Activated CD4-positive, alpha-beta T cell treated with anti-CD3 and anti-CD28 coated beads, Interleukin-2, amount 10 ng/mL, durations not matched to agents 24 days and 14 days (primary cell): ENCODE measurements at regions of chr2 and their contacts with region 1.

Region 1: GRCh38 chr2:38535744-38536506 is 66.8 kb downstream of the HNRNPLL start:
- DNase-seq: peak; percentile 95
- H3K4me3 Mint-ChIP-seq: peak overlapping the region; percentile 71
- H3K27ac Mint-ChIP-seq: no peak overlapping the region
- H3K4me1 Mint-ChIP-seq: peaks cover 2% of the 10 kb centered on the region
- H3K27me3 Mint-ChIP-seq: peaks cover 38% of the 10 kb centered on the region

Region 2: DNA sequence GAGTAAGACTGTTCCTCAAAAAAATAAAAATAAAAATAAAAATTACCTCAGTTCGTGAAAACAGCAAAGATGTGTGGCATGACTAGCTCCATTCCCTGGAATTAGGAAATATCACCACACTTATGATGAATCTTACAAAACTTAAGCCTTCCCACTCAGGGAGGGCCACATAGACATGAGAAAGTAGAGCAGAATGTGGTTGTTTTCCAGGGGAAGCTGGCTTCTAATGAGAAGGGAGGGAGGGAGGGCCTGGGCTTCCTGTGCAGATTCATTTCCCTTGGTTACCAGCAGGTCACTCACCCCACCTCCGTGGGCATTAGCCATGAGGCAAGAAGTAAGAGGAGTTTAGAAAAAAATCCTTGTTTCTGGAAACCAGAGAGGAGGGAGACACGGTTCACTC is 706.7 kb before region 1 on chr2:
- intact Hi-C with region 1: no loop called
- DNase-seq: no peak
- H3K4me3 Mint-ChIP-seq: no peak overlapping the region
- H3K27ac Mint-ChIP-seq: no peak overlapping the region
- H3K4me1 Mint-ChIP-seq: peaks cover 11% of the 10 kb centered on the region
- H3K27me3 Mint-ChIP-seq: no peaks in the 10 kb centered on the region

Region 3: GRCh38 chr2:38370664-38371063 is 165.3 kb before region 1 on chr2:
- intact Hi-C with region 1: no loop called
- DNase-seq: no peak
- H3K4me3 Mint-ChIP-seq: no peak overlapping the region
- H3K27ac Mint-ChIP-seq: no peak overlapping the region
- H3K4me1 Mint-ChIP-seq: peaks cover 24% of the 10 kb centered on the region
- H3K27me3 Mint-ChIP-seq: no peaks in the 10 kb centered on the region

Region 4: DNA sequence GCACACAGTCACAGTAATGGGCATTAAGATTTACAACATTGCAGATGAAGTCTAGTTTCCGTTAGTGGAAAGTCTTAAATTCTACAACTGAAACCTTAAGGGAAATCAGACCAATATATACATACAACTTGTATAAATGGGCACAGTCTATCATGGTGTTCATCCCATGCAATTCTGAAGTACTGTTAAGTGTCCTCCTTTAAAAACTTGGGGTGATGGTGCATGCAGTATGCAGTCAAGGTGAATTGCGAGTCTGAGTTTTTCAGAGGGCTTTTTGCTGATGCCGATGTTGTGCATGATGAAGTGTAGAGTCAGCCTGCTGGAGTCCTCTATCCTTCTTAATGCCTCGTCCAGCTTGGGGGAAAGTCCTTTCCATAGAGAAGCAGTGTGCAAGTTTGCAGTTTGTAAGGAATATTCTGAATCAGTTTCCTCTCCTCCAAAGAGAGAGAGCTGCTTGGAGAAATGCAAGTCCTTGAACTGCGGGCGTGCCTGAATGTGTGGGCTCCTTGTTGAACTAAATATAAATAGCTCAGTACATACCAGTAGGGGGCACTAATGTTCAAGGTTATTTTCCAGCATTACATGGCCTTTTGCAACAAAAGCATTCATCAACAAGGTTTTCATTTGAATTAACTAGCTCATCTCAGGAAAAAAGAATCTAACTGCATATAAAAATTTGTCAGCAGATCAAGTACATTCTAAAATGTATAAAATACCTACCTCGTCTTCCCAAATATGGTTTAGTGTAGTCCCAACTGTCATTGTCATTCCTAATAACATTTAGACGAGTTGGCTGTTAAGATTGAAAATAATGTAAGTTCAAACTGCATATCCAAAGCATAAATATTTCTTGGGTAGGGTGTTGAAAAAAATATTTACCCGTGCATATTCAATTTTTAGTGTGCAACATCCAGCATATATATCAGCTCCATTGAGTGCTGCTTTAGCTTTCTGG is 45.5 kb after region 1 on chr2:
- intact Hi-C with region 1: loop called (anchors 5 kb)
- DNase-seq: peak; percentile 83
- H3K4me3 Mint-ChIP-seq: no peak overlapping the region
- H3K27ac Mint-ChIP-seq: peak overlapping the region; percentile 22
- H3K4me1 Mint-ChIP-seq: peaks cover 26% of the 10 kb centered on the region
- H3K27me3 Mint-ChIP-seq: no peaks in the 10 kb centered on the region

Region 5: DNA sequence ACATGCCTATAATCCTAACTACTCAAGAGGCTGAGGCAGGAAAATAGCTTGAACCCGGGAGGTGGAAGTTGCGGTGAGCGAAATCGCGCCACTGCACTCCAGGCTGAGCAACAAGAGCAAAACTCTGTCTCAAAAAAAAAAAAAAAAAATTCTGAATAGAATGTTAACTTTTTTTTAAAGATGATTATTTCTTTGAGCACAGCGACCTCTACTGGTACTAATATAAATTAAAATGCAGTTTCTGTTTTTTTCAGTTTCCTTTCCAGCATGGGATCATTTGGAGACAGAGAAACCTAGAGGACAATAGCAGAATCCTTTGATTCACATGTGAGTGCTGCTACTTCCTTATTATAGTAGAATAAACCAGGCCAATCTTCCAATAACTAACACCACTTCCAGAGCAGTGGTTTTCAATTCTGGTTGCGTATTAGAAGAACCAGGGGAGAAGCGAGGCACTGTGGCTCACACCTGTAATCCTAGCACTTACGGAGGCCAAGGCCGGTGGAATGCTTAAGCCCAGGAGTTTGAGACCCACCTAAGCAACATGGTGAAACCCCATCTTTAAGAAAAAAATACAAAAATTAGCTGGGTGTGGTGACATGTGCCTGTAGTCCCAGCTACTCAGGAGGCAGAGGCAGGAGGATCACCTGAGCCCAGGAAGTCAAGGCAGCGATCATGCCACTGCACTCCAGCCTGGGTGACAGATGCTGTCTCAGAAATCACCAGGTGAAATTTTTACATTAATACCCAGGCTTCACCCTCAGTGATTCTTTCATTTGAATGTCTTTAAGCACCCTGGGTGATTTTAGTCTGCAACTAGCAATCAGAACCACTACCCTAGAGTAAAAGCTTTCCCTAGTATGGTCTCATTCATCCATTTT is 205.2 kb after region 1 on chr2:
- intact Hi-C with region 1: loop called (anchors 2 kb)
- DNase-seq: peak; percentile 67
- H3K4me3 Mint-ChIP-seq: no peak overlapping the region
- H3K27ac Mint-ChIP-seq: peak overlapping the region; percentile 13
- H3K4me1 Mint-ChIP-seq: peaks cover 28% of the 10 kb centered on the region
- H3K27me3 Mint-ChIP-seq: no peaks in the 10 kb centered on the region

Region 6: GRCh38 chr2:38835015-38835601 is 299.2 kb after region 1 on chr2:
- intact Hi-C with region 1: loop called (anchors 5 kb)
- DNase-seq: peak; percentile 66
- H3K4me3 Mint-ChIP-seq: no peak overlapping the region
- H3K27ac Mint-ChIP-seq: no peak overlapping the region
- H3K4me1 Mint-ChIP-seq: no peaks in the 10 kb centered on the region
- H3K27me3 Mint-ChIP-seq: no peaks in the 10 kb centered on the region

Region 7: DNA sequence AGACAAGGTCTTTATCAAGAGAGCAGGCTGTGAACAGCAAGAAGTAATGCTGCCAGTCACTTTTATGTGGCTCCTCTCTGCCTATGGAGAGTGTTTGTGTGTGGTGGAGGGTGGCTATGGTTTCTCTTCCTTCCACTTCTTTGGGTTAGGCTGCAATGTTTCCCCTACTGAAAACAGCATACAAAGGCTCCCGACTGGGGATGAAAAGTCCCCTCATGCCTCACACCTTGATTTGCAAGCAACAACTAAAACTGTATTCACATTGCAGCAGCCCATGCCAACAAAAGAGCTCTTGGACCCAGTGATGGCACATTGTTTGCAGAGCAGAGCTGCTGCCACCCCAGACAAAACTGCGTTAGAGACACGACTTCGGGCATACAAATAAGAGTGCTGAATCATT is 1614.3 kb after region 1 on chr2:
- intact Hi-C with region 1: no loop called
- DNase-seq: no peak
- H3K4me3 Mint-ChIP-seq: no peak overlapping the region
- H3K27ac Mint-ChIP-seq: no peak overlapping the region
- H3K4me1 Mint-ChIP-seq: peaks cover 2% of the 10 kb centered on the region
- H3K27me3 Mint-ChIP-seq: peaks cover 2% of the 10 kb centered on the region